Prostate gland (tissue), 2 donors: ENCODE measurements at regions of chr14 and their contacts with region 1.

Region 1: GRCh38 chr14:59313144-59313651 is 124.7 kb downstream of the DAAM1 start:
- DNase-seq: no peak
- H3K4me3 ChIP-seq: no peak overlapping the region
- H3K27ac ChIP-seq: peak overlapping the region; percentile 20 to 38
- H3K4me1 ChIP-seq: peaks cover 8% of the 10 kb centered on the region
- H3K27me3 ChIP-seq: no peaks in the 10 kb centered on the region
- CTCF ChIP-seq: no peak
- POLR2A ChIP-seq: no peak

Region 2: GRCh38 chr14:59132796-59133494 is 180.3 kb before region 1 on chr14:
- intact Hi-C with region 1: loop called (anchors 10 kb)
- DNase-seq: no peak
- H3K4me3 ChIP-seq: no peak overlapping the region
- H3K27ac ChIP-seq: no peak overlapping the region
- H3K4me1 ChIP-seq: no peaks in the 10 kb centered on the region
- H3K27me3 ChIP-seq: no peaks in the 10 kb centered on the region
- CTCF ChIP-seq: no peak
- POLR2A ChIP-seq: no peak

Region 3: GRCh38 chr14:59986556-59987059 is 673.4 kb after region 1 on chr14:
- intact Hi-C with region 1: no loop called
- DNase-seq: no peak
- H3K4me3 ChIP-seq: no peak overlapping the region
- H3K27ac ChIP-seq: no peak overlapping the region
- H3K4me1 ChIP-seq: no peaks in the 10 kb centered on the region
- H3K27me3 ChIP-seq: no peaks in the 10 kb centered on the region
- CTCF ChIP-seq: no peak
- POLR2A ChIP-seq: no peak